Mammary epithelial cell (primary cell): ENCODE measurements at regions of chr7 and their contacts with region 1.

Region 1: GRCh38 chr7:6651851-6652445 is 14.8 kb downstream of the ZNF316 start:
- DNase-seq: no peak
- H3K4me3 ChIP-seq: no peak overlapping the region
- H3K27ac ChIP-seq: no peak overlapping the region
- H3K4me1 ChIP-seq: no peaks in the 10 kb centered on the region
- H3K27me3 ChIP-seq: no peaks in the 10 kb centered on the region
- CTCF ChIP-seq: no peak

Region 2: DNA sequence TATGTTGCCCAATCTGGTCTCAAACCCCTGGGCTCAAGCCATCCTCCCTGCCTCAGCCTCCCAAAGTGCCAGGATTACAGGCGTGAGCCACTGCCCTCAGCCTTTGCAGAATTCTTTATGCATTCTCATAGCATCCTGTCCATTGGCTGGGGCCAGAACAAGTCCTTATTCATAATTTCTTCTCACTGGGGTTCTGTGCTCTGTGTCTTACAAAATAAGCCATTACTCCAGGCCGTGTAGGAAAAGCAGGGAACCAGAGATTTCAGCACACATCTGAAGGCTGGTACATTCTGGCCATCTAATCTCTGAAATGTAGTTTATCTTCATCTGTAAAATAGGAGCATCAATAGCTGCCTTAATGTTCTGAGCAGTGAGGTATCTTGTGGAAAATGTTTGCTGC is 781.6 kb before region 1 on chr7:
- CTCF ChIA-PET with region 1: no interaction called
- dilution Hi-C with region 1: no loop called
- in situ Hi-C with region 1: no loop called
- intact Hi-C with region 1: no loop called
- DNase-seq: no peak
- H3K4me3 ChIP-seq: no peak overlapping the region
- H3K27ac ChIP-seq: no peak overlapping the region
- H3K4me1 ChIP-seq: no peaks in the 10 kb centered on the region
- H3K27me3 ChIP-seq: no peaks in the 10 kb centered on the region
- CTCF ChIP-seq: no peak

Region 3: DNA sequence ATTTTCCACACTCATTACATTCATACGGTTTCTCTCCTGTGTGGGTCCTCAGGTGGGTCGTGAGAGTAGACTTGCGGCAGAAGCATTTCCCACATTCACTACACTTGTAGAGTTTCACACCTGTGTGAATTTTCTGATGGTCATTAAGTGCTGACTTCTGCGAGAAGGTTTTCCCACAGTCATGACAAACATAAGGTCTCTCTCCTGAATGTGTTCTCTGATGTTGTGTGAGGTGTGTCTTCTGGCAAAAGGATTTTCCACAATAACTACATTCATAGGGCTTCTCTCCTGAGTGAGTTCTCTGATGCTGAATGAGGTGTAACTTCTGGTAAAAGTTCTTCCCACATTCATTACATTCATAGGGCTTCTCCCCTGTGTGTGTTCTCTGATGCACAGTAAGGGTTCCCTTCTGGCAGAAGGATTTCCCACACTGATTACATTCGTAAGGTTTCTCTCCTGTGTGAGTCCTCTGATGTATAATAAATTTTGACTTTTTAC is 39.7 kb after region 1 on chr7:
- CTCF ChIA-PET with region 1: no interaction called
- dilution Hi-C with region 1: loop called (anchors 5 kb)
- in situ Hi-C with region 1: no loop called
- intact Hi-C with region 1: no loop called
- DNase-seq: peak; percentile 6
- H3K4me3 ChIP-seq: no peak overlapping the region
- H3K27ac ChIP-seq: no peak overlapping the region
- H3K4me1 ChIP-seq: no peaks in the 10 kb centered on the region
- H3K27me3 ChIP-seq: no peaks in the 10 kb centered on the region
- CTCF ChIP-seq: no peak

Region 4: GRCh38 chr7:6718124-6718523 is 66.2 kb after region 1 on chr7:
- CTCF ChIA-PET with region 1: no interaction called
- dilution Hi-C with region 1: loop called (anchors 5 kb)
- in situ Hi-C with region 1: no loop called
- intact Hi-C with region 1: no loop called
- DNase-seq: no peak
- H3K4me3 ChIP-seq: no peak overlapping the region
- H3K27ac ChIP-seq: no peak overlapping the region
- H3K4me1 ChIP-seq: no peaks in the 10 kb centered on the region
- H3K27me3 ChIP-seq: no peaks in the 10 kb centered on the region
- CTCF ChIP-seq: no peak